Cardiac septum (tissue), 1 donor: ENCODE measurements at regions of chr17 and their contacts with region 1.

Region 1: GRCh38 chr17:48131216-48131824 is 23.8 kb downstream of the SNX11 start:
- DNase-seq: no peak

Region 2: GRCh38 chr17:48037036-48037837 is 94.1 kb before region 1 on chr17 and contains the start of gene COPZ2:
- intact Hi-C with region 1: no loop called
- DNase-seq: no peak
- total RNA-seq, gene COPZ2: 78.6 TPM

Region 3: GRCh38 chr17:48055442-48056237 is 75.7 kb before region 1 on chr17:
- intact Hi-C with region 1: no loop called
- DNase-seq: no peak

Region 4: GRCh38 chr17:48074315-48075081 is 56.8 kb before region 1 on chr17:
- intact Hi-C with region 1: loop called (anchors 5 kb)
- DNase-seq: no peak